ENCODE measurements at regions of chr4 and their contacts with region 1.

Region 1: GRCh38 chr4:150497612-150498011 is 84.3 kb upstream of the MAB21L2 start:
- DNase-seq: no peak
- ATAC-seq: no peak
- H3K4me3 ChIP-seq: no peak overlapping the region
- H3K4me3 Mint-ChIP-seq: no peak overlapping the region
- H3K27ac ChIP-seq: no peak overlapping the region
- H3K27ac Mint-ChIP-seq: no peak overlapping the region
- H3K4me1 ChIP-seq: no peaks in the 10 kb centered on the region
- H3K4me1 Mint-ChIP-seq: peaks cover 0 to 17% (median 4%) of the 10 kb centered on the region in 7 donors
- H3K27me3 ChIP-seq: no peaks in the 10 kb centered on the region
- H3K27me3 Mint-ChIP-seq: no peaks in the 10 kb centered on the region

Region 2: GRCh38 chr4:150479657-150480056 is 18.0 kb before region 1 on chr4:
- CTCF ChIA-PET with region 1: interaction called, 3 read pairs
- POLR2A ChIA-PET with region 1: no interaction called
- intact Hi-C with region 1: loop called in 1 of 2 experiments (anchors 2 kb)
- DNase-seq: no peak
- ATAC-seq: no peak
- H3K4me3 ChIP-seq: no peak overlapping the region
- H3K4me3 Mint-ChIP-seq: no peak overlapping the region
- H3K27ac ChIP-seq: no peak overlapping the region
- H3K27ac Mint-ChIP-seq: no peak overlapping the region
- H3K4me1 ChIP-seq: no peaks in the 10 kb centered on the region
- H3K4me1 Mint-ChIP-seq: peaks cover 0 to 5% (median 0%) of the 10 kb centered on the region in 7 donors
- H3K27me3 ChIP-seq: no peaks in the 10 kb centered on the region
- H3K27me3 Mint-ChIP-seq: no peaks in the 10 kb centered on the region